Right cardiac atrium (tissue), 5 donors: ENCODE measurements at regions of chr3 and their contacts with region 1.

Region 1: DNA sequence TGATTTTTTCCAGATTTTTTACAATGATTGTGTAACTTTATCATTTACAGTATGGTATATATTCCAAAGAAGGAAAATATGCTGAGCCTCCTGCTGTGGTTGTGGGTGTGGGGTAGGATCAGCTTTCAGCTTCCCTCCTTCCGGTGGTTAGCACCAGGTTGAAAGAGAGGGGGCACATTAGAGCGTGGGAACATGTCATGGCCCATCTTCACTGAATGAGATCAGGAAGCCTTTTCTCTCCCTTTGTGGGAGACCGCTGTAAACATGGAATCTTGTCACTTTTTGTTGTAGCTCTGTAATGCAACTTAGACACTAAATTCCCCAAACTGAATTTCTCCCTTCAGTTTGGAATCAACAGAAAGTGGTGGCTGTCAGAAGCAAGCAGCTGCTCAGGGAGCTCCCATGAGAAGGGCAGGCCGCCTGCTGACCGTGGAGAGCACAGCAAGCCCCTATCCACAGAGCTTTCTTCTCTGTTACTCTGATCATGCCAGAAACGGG is 86.7 kb upstream of the LIMD1 start:
- DNase-seq: peak; percentile 61 to 78 (median 77)
- ATAC-seq: peak; percentile 76 to 81
- H3K4me3 ChIP-seq: no peak overlapping the region
- H3K27ac ChIP-seq: no peak overlapping the region
- H3K4me1 ChIP-seq: no peaks in the 10 kb centered on the region
- H3K27me3 ChIP-seq: no peaks in the 10 kb centered on the region

Region 2: DNA sequence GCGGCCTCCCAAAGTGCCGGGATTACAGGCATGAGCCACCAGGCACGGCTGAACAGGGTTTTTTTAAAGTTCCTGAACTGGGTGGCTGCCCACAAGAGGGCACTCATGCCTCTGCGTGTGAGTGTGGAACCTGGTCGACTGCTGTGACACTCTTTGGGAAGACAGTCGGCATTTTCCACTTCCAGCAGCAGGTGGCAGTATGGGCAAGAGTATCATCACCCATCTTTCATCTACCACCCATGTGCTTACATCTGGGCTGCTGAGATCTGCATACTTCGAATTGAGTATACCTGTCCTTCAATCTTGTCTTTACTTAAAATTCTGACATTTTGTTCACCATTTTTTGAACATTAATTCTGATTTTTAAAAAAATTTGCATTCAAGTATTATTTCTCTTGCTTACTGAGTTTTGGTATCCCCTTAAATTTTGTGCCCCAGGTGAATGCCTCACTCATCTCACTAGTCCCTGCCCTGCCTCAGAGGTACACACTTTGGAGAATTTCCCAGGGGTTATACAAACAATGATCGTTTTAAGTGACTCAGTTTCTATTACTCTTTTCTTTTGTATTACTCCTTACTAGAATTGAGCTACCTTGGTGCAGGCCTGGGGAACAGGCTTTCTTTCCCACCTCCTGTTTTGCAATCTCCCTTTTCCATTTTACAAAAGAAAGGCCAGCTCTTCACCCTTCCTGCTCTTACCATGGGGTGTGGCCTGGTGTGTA is 470.0 kb before region 1 on chr3:
- intact Hi-C with region 1: loop called in 2 of 4 experiments (anchors 5 to 10 kb)
- DNase-seq: peak; percentile 90 to 97 (median 94)
- ATAC-seq: peak; percentile 76 to 79
- H3K4me3 ChIP-seq: no peak overlapping the region
- H3K27ac ChIP-seq: no peak overlapping the region
- H3K4me1 ChIP-seq: peaks cover 2% of the 10 kb centered on the region
- H3K27me3 ChIP-seq: no peaks in the 10 kb centered on the region

Region 3: GRCh38 chr3:45426161-45426560 is 81.7 kb before region 1 on chr3:
- intact Hi-C with region 1: no loop called
- DNase-seq: no peak
- ATAC-seq: no peak
- H3K4me3 ChIP-seq: no peak overlapping the region
- H3K27ac ChIP-seq: no peak overlapping the region
- H3K4me1 ChIP-seq: no peaks in the 10 kb centered on the region
- H3K27me3 ChIP-seq: no peaks in the 10 kb centered on the region

Region 4: DNA sequence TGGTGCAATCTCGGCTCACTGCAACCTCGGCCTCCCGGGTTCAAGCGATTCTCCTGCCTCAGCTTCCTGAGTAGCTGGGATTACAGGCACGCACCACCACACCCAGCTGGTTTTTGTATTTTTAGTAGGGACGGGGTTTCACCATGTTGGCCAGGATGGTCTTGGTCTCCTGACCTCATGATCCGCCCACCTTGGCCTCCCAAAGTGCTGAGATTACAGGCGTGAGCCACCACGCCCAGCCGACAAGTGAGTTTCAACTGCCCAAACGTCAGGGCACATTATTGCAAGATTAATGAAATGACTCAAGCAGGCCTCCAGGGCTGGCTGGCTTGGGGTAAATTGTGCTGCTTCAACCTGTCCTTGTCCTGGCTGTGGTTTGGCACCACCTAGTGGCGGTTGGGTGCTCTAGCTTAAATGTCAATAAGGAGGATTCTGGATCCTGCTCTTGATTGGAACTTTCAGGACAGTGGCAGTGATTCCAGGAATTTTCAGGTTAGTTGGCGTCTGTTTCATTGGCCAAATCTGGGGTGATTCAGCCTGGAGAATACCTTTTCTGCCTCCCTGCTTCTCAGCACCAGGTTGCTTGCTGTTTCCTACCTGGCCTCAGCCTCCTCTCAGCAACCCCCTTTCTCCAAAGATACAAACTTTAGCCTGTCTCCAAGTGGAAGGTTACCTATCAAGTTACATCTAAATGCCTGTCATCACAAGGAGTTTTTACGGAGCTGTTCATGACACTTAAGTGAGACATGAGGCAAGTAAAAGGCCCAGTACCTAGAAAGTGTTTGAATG is 148.9 kb after region 1 on chr3:
- intact Hi-C with region 1: loop called (anchors 2 to 5 kb)
- DNase-seq: peak; percentile 94 to 96 (median 94)
- ATAC-seq: peak; percentile 88 to 92
- H3K4me3 ChIP-seq: no peak overlapping the region
- H3K27ac ChIP-seq: no peak overlapping the region
- H3K4me1 ChIP-seq: peaks cover 7% of the 10 kb centered on the region
- H3K27me3 ChIP-seq: no peaks in the 10 kb centered on the region